T-cell (primary cell): ENCODE measurements at regions of chr5 and their contacts with region 1.

Region 1: GRCh38 chr5:134659456-134659855 is 10.9 kb downstream of the SEC24A start:
- DNase-seq: no peak
- ATAC-seq: no peak
- H3K4me3 ChIP-seq: no peak overlapping the region
- H3K4me3 Mint-ChIP-seq: no peak overlapping the region
- H3K27ac ChIP-seq: no peak overlapping the region
- H3K27ac Mint-ChIP-seq: no peak overlapping the region
- H3K4me1 ChIP-seq: no peaks in the 10 kb centered on the region
- H3K4me1 Mint-ChIP-seq: peaks cover 25 to 34% (median 31%) of the 10 kb centered on the region in 3 donors
- H3K27me3 ChIP-seq: no peaks in the 10 kb centered on the region
- H3K27me3 Mint-ChIP-seq: no peaks in the 10 kb centered on the region

Region 2: DNA sequence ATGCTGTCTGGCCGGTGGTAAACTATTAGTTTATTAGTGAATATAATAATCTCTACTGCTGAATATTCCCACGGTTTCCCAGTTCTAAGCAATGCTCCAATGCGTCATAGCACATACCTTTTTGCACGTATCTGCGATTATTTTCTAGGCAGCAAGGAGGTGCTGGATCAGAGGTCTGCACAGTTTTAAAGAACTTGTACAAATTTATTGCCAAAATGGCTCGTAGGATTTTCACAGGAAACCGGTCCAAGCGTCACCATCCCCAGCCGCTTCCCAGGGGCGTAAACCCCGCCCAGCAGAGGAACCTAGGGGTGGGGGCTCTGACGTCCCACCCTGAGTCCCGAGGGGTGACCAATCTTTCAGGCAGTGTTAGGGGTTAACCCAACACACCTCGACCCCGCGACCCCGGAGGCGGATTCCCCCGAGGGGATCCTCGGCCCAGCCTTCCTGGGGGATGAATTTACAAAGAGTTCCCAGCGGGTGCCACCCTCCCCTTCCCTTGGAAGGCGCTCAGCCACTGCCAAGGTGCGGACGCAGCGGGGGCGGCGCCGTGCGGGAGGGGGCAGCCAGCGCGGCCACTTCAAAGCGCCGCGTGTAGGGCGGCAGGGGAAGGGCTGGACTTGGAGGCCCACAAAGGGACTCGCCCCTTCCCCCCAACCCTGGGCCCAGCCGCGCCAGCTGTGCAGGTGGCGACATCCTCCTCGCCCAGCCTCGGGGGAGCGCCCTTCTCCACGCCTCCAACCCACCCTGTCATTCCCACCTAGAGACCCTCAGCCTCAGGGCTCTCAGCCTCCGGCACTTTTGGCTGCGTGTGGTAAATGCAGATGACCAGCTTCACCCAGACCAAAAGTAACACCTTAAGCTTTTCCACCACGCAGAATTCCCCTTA is 588.5 kb before region 1 on chr5:
- CTCF ChIA-PET with region 1: no interaction called
- POLR2A ChIA-PET with region 1: interaction called in 1 of 2 experiments, 10 read pairs
- DNase-seq: peak in 8 of 35 experiments; percentile 16 to 49 (median 22)
- ATAC-seq: peak; percentile 44 to 73 (median 62)
- H3K4me3 ChIP-seq: peak overlapping the region; percentile 49 to 53
- H3K4me3 Mint-ChIP-seq: peak overlapping the region; percentile 75 to 82 (median 81)
- H3K27ac ChIP-seq: peak overlapping the region; percentile 44
- H3K27ac Mint-ChIP-seq: peak overlapping the region; percentile 91 to 95
- H3K4me1 ChIP-seq: peaks cover 43 to 55% of the 10 kb centered on the region in 2 experiments
- H3K4me1 Mint-ChIP-seq: peaks cover 70 to 82% (median 71%) of the 10 kb centered on the region in 3 donors
- H3K27me3 ChIP-seq: peaks cover 0 to 11% of the 10 kb centered on the region in 2 experiments
- H3K27me3 Mint-ChIP-seq: no peaks in the 10 kb centered on the region

Region 3: GRCh38 chr5:134153657-134154056 is 505.8 kb before region 1 on chr5:
- CTCF ChIA-PET with region 1: interaction called in 1 of 2 experiments, 5 read pairs
- POLR2A ChIA-PET with region 1: interaction called in 1 of 2 experiments, 12 read pairs
- DNase-seq: no peak
- ATAC-seq: peak in 1 of 4 experiments; percentile 10
- H3K4me3 ChIP-seq: no peak overlapping the region
- H3K4me3 Mint-ChIP-seq: peak overlapping the region in 1 of 3 donors; percentile 49
- H3K27ac ChIP-seq: no peak overlapping the region
- H3K27ac Mint-ChIP-seq: peak overlapping the region; percentile 77 to 88
- H3K4me1 ChIP-seq: peaks cover 25 to 34% of the 10 kb centered on the region in 2 experiments
- H3K4me1 Mint-ChIP-seq: peaks cover 79 to 90% (median 80%) of the 10 kb centered on the region in 3 donors
- H3K27me3 ChIP-seq: no peaks in the 10 kb centered on the region
- H3K27me3 Mint-ChIP-seq: no peaks in the 10 kb centered on the region

Region 4: GRCh38 chr5:135174315-135175096 is 515.0 kb after region 1 on chr5:
- CTCF ChIA-PET with region 1: no interaction called
- POLR2A ChIA-PET with region 1: no interaction called
- DNase-seq: no peak
- ATAC-seq: no peak
- H3K4me3 ChIP-seq: no peak overlapping the region
- H3K4me3 Mint-ChIP-seq: no peak overlapping the region
- H3K27ac ChIP-seq: no peak overlapping the region
- H3K27ac Mint-ChIP-seq: no peak overlapping the region
- H3K4me1 ChIP-seq: no peaks in the 10 kb centered on the region
- H3K4me1 Mint-ChIP-seq: no peaks in the 10 kb centered on the region
- H3K27me3 ChIP-seq: peaks cover 5 to 27% of the 10 kb centered on the region in 2 experiments
- H3K27me3 Mint-ChIP-seq: peaks cover 23 to 44% of the 10 kb centered on the region in 2 donors